Ovary (tissue), 10 donors: ENCODE measurements at regions of chr12 and their contacts with region 1.

Region 1: GRCh38 chr12:93677195-93678064 is at the start of gene CRADD:
- DNase-seq: peak; percentile 78 to 87 (median 83)
- H3K4me3 ChIP-seq: peak within 1 kb of the TSS; percentile 91
- H3K27ac ChIP-seq: peak within 1 kb of the TSS; percentile 86 to 95
- H3K4me1 ChIP-seq: peaks cover 6% of the 10 kb centered on the region
- H3K27me3 ChIP-seq: no peaks in the 10 kb centered on the region
- CTCF ChIP-seq: no peak
- EP300 ChIP-seq: peak; percentile 16
- POLR2A ChIP-seq: peak; percentile 70
- total RNA-seq, gene CRADD: 11.4 to 67.8 (median 16.9) TPM

Region 2: DNA sequence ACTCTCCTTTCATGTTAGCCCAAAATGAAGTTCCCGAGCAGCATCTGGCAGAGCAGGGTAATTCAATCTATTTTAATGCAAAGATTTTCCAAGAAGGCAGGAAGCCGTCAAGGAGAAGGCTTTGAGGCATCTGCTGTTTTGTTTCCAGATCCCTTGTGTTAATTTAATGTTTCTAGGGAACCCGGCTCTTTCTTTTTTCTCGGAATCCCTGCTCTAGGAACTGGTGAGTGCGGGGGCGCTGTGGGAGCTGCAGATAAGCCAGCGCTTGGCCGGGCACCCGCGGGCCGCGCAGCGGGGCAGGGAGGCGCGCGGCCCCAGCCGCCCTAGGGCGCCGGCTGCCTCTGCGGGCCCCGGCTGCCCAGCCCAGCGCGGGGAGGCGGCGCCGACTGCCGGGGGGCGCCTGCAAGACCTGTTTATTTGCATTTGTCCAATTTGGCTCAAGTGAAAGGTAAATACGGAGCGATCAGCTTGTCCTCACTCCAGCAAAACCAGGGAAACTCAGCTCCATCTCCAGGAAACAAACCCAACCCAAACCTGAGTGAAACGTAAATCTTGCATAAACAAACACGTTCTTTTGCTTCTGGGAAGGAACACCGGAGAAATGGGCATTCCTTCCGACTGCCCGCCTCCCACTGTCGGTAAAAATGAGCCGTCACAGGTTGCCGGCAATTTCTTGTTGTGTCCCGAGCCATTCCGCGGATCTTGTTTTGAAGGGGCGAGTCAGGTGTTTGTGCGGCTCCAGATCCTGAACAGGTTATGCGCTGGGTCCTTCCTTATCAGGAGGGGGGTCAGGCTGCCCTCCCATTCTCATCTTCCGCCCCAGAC is 64.9 kb after region 1 on chr12:
- intact Hi-C with region 1: loop called (anchors 10 kb)
- DNase-seq: peak; percentile 76 to 87 (median 82)
- H3K4me3 ChIP-seq: peak overlapping the region; percentile 49
- H3K27ac ChIP-seq: peak overlapping the region; percentile 57 to 77
- H3K4me1 ChIP-seq: peaks cover 5% of the 10 kb centered on the region
- H3K27me3 ChIP-seq: no peaks in the 10 kb centered on the region
- CTCF ChIP-seq: peak in 2 of 3 donors; percentile 25 to 39
- EP300 ChIP-seq: peak; percentile 46
- POLR2A ChIP-seq: no peak